ENCODE measurements at regions of chr5 and their contacts with region 1.

Region 1: DNA sequence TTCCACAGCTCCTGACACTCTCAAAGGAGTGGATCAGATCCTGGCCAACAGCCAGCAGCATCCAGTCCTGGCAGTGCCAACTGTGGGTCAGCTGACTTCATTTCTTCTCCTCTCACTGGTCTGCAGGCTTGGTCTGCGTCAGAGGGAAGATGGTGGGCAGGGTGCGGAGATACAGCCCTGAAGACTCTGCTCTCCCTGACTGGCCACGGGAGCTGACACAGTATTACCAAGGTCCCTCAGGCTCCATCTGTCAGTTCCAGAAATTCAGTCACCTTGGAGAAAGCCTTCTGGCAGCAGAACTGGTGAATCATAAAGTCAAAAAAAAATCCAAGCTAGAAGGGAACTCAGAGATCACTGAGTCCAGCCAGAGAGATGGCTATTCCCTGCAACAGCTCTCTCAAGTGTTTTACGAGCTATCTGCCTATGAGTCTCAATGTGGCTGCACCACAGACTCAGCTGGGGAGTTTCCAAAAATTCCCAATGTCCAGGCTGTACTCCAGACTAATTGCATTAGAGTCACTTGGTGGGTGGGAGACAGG is 28.0 kb downstream of the C1QTNF2 start:
- DNase-seq: no peak
- H3K4me3 Mint-ChIP-seq: no peak overlapping the region
- H3K27ac Mint-ChIP-seq: no peak overlapping the region
- H3K4me1 Mint-ChIP-seq: no peaks in the 10 kb centered on the region
- H3K27me3 Mint-ChIP-seq: no peaks in the 10 kb centered on the region
- CTCF ChIP-seq: no peak

Region 2: DNA sequence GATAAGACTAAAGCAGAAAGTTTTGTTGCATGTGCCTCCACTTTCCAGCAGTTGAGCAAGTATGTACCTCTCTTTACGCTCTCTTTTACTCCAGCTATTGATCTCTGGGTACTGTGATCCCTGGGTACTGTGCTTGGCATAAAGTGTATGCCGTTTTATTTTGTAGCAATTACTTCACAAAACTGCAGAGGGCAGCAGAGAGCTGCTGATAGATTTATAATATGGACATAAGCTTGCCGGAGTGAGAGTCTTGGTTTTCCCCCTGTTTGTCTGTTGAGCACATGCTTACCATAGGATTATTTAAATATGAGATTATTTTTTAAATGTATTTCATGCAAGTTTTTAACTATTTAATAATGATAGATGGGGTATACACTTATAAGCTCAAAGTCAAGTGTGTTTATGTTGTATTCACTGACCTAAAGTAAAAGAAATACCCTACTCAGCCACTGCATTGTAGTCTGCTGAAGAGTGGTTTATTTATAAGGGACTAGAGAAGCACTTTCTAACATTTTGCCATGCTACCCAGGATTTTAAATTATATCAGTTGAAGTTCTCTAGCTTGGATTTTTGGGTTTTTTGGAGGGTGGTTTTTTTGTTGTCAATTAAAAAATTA is 320.5 kb before region 1 on chr5:
- CTCF ChIA-PET with region 1: interaction called, 12 read pairs
- intact Hi-C with region 1: loop called (anchors 1 kb)
- DNase-seq: peak; percentile 73
- H3K4me3 Mint-ChIP-seq: no peak overlapping the region
- H3K27ac Mint-ChIP-seq: peak overlapping the region; percentile 17
- H3K4me1 Mint-ChIP-seq: peaks cover 10% of the 10 kb centered on the region
- H3K27me3 Mint-ChIP-seq: no peaks in the 10 kb centered on the region
- CTCF ChIP-seq: peak; percentile 76

Region 3: GRCh38 chr5:160082614-160083500 is 259.6 kb before region 1 on chr5:
- CTCF ChIA-PET with region 1: interaction called, 16 read pairs
- intact Hi-C with region 1: loop called (anchors 1 kb)
- DNase-seq: no peak
- H3K4me3 Mint-ChIP-seq: no peak overlapping the region
- H3K27ac Mint-ChIP-seq: peak overlapping the region; percentile 29
- H3K4me1 Mint-ChIP-seq: peaks cover 14% of the 10 kb centered on the region
- H3K27me3 Mint-ChIP-seq: no peaks in the 10 kb centered on the region
- CTCF ChIP-seq: no peak

Region 4: DNA sequence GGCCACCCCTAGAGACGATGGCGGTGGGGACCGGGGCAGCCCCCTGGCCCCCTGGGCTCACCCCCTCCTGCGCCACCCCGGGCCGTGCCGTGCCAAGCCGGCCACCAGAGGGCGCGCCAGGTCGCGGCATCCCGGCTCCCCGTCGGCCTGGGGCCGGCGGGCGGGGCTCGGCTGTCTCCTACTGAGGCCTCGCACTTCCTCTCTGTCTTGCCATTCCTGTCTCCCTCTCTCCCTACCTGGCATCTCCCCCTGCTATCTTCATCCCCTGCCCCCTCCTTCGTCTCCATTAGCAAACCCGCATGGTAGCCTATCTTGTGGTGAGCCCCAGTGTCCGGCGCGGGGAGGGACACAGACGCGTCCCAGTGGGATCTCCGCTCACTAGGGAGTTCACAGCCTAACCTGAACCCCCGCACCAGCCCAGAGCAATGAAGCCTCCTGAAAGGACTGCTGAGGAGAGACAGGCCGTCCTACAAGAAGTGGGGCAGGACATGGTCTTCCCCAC is 143.0 kb before region 1 on chr5:
- CTCF ChIA-PET with region 1: interaction called, 8 read pairs
- intact Hi-C with region 1: loop called (anchors 1 kb)
- DNase-seq: peak; percentile 92
- H3K4me3 Mint-ChIP-seq: peak overlapping the region; percentile 68
- H3K27ac Mint-ChIP-seq: peak overlapping the region; percentile 38
- H3K4me1 Mint-ChIP-seq: no peaks in the 10 kb centered on the region
- H3K27me3 Mint-ChIP-seq: no peaks in the 10 kb centered on the region
- CTCF ChIP-seq: peak; percentile 98

Region 5: DNA sequence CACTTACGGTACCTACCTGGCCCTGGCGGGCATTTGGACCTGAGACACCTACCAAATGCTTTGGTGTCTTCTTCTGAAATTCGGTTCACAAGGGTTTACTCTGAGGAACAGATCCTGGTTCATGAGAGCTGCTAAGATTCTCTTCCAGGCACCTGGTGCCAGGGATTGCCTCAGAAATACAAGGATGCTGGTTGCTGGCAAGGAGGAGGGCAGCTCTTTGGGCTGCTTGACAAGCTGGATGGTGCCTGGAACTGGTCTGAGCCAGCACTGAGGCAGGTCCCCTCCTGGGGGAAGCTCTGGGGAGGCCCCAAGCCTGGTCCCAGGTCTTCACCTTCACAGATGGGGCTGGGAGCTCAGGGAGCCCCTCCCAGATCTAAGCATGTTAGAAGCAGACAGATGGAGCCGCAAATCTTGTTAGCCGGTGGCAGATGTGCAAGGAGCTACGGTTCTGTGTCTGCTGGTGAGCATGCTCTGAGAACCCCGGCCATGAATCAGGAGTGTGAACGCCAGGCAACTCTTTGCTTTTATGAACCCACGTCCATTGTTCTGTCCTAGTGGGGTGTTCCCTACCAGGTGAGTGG is 96.9 kb before region 1 on chr5:
- CTCF ChIA-PET with region 1: interaction called, 20 read pairs
- intact Hi-C with region 1: loop called (anchors 1 kb)
- DNase-seq: no peak
- H3K4me3 Mint-ChIP-seq: no peak overlapping the region
- H3K27ac Mint-ChIP-seq: no peak overlapping the region
- H3K4me1 Mint-ChIP-seq: no peaks in the 10 kb centered on the region
- H3K27me3 Mint-ChIP-seq: no peaks in the 10 kb centered on the region
- CTCF ChIP-seq: no peak

Region 6: GRCh38 chr5:160260881-160261815 is 81.3 kb before region 1 on chr5:
- CTCF ChIA-PET with region 1: no interaction called
- intact Hi-C with region 1: loop called (anchors 5 kb)
- DNase-seq: peak; percentile 71
- H3K4me3 Mint-ChIP-seq: peak overlapping the region; percentile 31
- H3K27ac Mint-ChIP-seq: peak overlapping the region; percentile 81
- H3K4me1 Mint-ChIP-seq: peaks cover 34% of the 10 kb centered on the region
- H3K27me3 Mint-ChIP-seq: no peaks in the 10 kb centered on the region
- CTCF ChIP-seq: no peak

Region 7: DNA sequence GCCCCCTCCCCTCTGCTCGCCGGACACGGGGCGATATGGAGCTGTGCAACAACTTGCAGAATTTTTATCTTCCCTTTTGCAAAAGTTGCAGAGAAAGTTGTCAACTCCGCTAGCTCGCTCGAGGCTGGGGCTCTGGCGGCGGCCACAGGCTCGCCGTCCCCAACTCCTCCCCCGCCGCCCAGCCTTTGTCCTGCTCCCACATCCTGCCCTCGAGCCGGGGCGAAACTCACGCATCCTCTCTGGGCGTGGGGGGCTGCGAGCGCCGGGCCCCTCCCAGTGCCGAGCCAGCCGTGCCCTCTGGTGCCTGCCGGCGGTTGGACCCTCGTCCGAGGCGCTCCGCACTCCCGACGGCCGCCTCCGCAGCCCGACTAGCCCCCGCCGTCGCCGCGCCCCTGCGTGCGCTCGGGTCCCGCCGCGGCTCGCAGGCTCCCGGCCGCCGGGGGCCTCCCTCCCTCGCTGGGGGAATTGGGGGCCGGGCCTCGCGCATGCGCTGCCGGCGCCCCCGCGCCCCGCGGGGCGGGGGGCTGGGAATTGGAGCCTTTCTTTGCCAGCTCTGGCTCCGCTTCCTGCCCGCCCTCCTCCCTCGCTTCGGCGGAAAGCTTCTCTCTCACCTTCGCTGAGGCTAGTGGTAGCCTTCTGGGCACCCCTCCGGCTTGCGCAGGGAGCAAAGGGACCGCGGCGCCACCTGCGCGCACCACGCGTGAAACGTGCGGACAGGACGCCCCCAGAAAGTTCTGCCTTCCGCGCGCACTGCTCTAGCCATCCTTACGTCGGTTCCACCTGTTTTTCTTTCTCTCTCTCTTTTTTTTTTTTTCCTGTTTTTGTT is 30.1 kb before region 1 on chr5 and contains the start of gene CCNJL:
- CTCF ChIA-PET with region 1: no interaction called
- intact Hi-C with region 1: loop called (anchors 2 kb)
- DNase-seq: peak; percentile 84
- H3K4me3 Mint-ChIP-seq: peak within 1 kb of the TSS; percentile 81
- H3K27ac Mint-ChIP-seq: peak within 1 kb of the TSS; percentile 73
- H3K4me1 Mint-ChIP-seq: peaks cover 59% of the 10 kb centered on the region
- H3K27me3 Mint-ChIP-seq: no peaks in the 10 kb centered on the region
- CTCF ChIP-seq: no peak
- total RNA-seq, gene CCNJL: 13.2 and 17.4 TPM in 2 replicates